ENCODE measurements at regions of chr19 and their contacts with region 1.

Region 1: DNA sequence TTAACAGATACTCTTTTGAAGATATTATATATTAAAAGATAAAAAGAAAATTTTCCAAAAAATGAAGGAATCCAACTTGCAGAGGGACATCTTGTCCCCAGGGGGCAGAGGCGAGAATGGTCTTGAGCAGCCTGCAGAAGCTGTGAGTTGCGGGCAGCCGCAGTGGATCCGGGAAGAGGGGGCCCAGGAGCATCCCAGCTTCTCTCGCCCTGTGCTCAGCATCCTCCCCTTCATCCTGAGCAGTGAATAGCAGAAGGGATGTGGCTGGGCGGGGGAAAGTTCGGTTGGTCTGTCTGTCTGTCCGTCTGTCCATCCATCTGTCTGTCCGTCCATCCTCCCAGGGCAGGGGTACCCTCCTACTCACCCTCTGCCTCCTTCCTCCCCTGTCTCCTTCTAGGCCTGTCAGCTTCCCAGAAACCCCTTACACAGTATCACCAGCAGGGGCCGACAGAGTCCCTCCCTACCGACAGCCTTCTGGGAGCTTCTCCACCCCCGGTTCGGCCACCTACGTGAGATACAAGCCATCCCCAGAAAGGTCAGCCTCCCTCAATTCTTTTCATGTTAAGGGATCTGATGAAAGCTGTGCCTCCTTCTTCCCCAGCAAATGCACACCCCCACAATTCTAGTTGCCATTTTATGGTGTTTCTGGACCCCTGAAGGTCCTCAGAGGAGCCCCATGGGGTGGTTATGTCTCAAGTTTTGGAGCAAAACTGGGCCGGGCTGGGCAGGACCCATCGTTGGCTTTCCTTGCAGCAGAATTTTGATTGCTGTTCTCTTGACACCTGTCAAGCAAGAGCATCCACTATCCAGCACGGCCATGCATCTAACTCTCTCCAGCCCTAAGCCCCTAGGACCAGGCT is 81.6 kb downstream of the DPF1 start:
- DNase-seq: peak; percentile 56

Region 2: DNA sequence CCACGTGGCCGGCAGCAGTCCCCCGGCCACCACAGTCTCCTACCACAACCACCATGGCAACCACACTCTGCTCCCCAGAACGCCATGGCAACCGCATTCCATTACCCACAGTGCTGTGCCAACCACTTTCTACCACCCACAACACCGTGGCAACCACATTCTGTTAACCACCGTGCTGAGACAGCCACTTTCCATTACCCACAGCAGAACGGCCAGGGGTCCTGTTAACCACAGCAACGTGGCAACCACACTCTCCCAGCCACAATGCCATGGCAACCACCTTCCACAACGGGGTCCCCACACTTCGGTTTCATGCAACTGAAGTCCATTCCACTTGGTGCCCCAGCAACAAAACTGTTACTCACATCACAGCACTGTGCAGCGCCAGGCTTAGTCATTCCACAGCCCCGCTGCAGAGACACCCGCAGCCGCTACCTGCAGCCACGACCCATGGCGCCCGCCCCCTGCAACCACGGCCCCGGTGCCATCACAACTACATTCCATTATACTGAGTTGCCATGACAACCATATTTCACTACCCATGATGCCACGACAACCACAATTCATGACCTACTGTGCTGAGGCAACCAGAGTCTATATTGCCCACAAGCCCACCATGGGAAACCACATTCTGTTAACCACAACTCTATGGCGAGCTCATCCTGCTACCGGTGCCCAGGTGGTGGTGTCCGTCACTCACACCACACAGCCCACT is 71.7 kb after region 1 on chr19:
- in situ Hi-C with region 1: loop called (anchors 10 kb)
- DNase-seq: no peak

Measured in G401 (cell line).